Esophagus squamous epithelium (tissue), 5 donors: ENCODE measurements at regions of chr1 and their contacts with region 1.

Region 1: GRCh38 chr1:201703621-201704439 is 125.1 kb upstream of the IPO9 start:
- DNase-seq: no peak
- H3K4me3 ChIP-seq: no peak overlapping the region
- H3K27ac ChIP-seq: peak overlapping the region; percentile 11 to 73 (median 58)
- H3K4me1 ChIP-seq: peaks cover 10 to 33% (median 14%) of the 10 kb centered on the region in 3 donors
- H3K27me3 ChIP-seq: peaks cover 0 to 4% (median 0%) of the 10 kb centered on the region in 4 donors
- CTCF ChIP-seq: peak; percentile 91 to 97 (median 96)
- POLR2A ChIP-seq: no peak

Region 2: GRCh38 chr1:201559679-201560162 is 144.1 kb before region 1 on chr1:
- intact Hi-C with region 1: loop called (anchors 2 kb)
- DNase-seq: no peak
- H3K4me3 ChIP-seq: no peak overlapping the region
- H3K27ac ChIP-seq: peak overlapping the region in 3 of 4 donors; percentile 18 to 21 (median 19)
- H3K4me1 ChIP-seq: peaks cover 0 to 68% (median 28%) of the 10 kb centered on the region in 3 donors
- H3K27me3 ChIP-seq: no peaks in the 10 kb centered on the region
- CTCF ChIP-seq: peak; percentile 57 to 97 (median 94)
- POLR2A ChIP-seq: no peak